Spleen (tissue), 13 donors: ENCODE measurements at regions of chr3 and their contacts with region 1.

Region 1: DNA sequence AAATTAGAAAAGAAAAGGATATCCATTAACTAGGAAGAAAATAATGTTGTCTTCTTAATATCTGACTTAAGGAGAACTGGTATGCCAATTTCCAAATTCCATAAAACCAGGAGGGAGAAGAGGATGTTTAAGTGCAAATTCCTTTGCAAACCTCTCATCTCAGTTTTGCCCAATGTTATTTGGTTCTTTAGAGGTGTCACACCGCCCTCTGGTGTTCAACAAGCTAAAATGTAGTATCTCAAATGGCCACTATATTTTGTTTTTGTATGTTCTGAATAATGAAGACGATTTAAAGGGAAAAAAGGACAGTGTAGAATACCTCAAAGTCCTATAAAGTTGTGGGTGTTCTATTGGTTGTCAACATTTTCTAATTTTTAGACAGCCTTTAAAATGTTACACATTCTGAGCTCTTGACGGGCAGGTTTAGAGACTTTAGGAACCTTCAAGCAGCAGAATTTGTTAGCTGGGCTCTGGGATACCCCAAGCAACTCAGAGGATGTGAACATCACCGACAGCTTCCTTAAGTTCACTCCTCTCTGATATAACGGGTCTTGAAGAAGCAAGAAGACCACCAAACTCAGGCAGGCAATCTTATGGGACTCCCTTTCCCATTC is 458.3 kb downstream of the MFSD1 start:
- DNase-seq: no peak
- H3K4me3 ChIP-seq: no peak overlapping the region
- H3K27ac ChIP-seq: no peak overlapping the region
- H3K4me1 ChIP-seq: no peaks in the 10 kb centered on the region
- H3K27me3 ChIP-seq: no peaks in the 10 kb centered on the region
- CTCF ChIP-seq: peak in 9 of 11 experiments; percentile 39 to 67 (median 63)
- POLR2A ChIP-seq: no peak

Region 2: GRCh38 chr3:158845765-158846350 is 414.3 kb before region 1 on chr3:
- intact Hi-C with region 1: loop called (anchors 5 kb)
- DNase-seq: no peak
- H3K4me3 ChIP-seq: no peak overlapping the region
- H3K27ac ChIP-seq: no peak overlapping the region
- H3K4me1 ChIP-seq: peaks cover 0 to 3% (median 0%) of the 10 kb centered on the region in 6 donors
- H3K27me3 ChIP-seq: no peaks in the 10 kb centered on the region
- CTCF ChIP-seq: peak in 10 of 11 experiments; percentile 16 to 72 (median 60)
- POLR2A ChIP-seq: no peak

Region 3: GRCh38 chr3:159804726-159805410 is 544.7 kb after region 1 on chr3:
- intact Hi-C with region 1: loop called (anchors 5 kb)
- DNase-seq: no peak
- H3K4me3 ChIP-seq: no peak overlapping the region
- H3K27ac ChIP-seq: peak overlapping the region in 4 of 8 donors; percentile 39 to 55 (median 51)
- H3K4me1 ChIP-seq: peaks cover 0 to 10% (median 0%) of the 10 kb centered on the region in 6 donors
- H3K27me3 ChIP-seq: no peaks in the 10 kb centered on the region
- CTCF ChIP-seq: peak in 10 of 11 experiments; percentile 27 to 81 (median 66)
- POLR2A ChIP-seq: no peak

Region 4: DNA sequence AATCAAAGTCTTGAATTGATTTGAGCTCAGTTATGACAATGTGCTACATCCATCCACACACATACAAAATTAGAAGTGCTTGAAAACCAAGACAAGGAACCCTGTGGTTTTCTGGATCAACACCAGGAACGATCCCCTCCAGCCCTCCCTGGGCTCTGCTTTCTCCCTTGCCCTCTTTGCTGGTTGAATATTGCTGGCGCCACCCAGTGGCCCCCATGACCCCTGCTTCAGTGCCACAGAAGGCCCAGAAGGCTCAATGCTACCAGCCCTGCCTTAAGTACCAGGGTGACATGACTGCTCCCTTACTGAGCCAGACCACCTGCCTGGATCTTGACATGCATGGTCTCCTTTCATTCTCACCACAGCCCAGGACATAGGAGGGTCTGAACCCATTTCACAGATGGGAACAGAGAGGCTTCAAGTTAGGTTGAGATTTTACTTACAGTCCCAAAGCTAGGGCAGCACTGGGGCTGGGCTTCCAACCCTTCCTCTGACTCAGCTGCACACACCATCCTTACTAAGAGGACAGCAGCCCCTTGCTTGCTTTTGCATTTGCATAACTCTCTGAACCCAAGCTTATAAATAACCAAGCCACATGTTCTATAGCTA is 743.5 kb after region 1 on chr3:
- intact Hi-C with region 1: loop called (anchors 10 kb)
- DNase-seq: peak; percentile 79
- H3K4me3 ChIP-seq: no peak overlapping the region
- H3K27ac ChIP-seq: no peak overlapping the region
- H3K4me1 ChIP-seq: peaks cover 0 to 5% (median 0%) of the 10 kb centered on the region in 6 donors
- H3K27me3 ChIP-seq: no peaks in the 10 kb centered on the region
- CTCF ChIP-seq: peak; percentile 7 to 73 (median 59)
- POLR2A ChIP-seq: no peak